H1 (cell line): ENCODE measurements at regions of chr9 and their contacts with region 1.

Region 1: DNA sequence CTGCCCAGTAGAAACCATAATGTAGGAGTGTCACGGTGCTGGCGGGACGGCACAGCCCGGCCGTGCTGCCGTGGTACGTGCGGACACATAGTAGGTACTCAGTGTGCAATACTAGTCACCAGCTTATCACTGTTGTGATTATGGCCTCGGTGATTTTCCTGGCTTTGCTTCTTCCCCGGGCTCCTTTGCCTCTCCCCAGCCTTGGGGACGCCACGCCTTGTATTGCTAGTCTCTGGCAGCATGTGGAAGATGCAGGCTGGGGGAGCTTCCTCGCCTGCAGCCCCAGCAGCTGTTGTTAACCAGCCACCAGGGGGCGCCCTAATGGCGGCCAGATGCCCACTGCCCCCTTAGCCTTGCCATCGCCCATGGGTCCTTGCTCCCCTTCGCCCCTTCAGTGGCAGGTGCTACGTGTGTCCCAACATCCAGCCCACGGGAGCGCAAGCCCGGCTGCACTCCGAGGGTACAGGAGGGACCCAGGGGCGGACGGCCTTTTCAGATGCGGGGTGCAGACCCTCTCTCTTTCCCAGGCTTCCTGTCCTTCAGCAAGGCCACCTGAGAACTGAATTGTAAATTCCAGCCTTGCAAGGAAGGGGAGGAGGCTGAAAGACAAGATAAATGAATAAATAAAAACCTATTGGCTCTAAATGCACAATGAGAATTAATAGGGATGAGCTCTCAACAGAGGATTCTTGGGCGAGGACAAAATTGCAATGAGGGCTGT is 8.0 kb downstream of the NTNG2 start:
- DNase-seq: peak in 1 of 2 experiments; percentile 91
- H3K4me3 ChIP-seq: no peak overlapping the region
- H3K27ac ChIP-seq: no peak overlapping the region
- H3K4me1 ChIP-seq: peaks cover 0 to 3% (median under 1%) of the 10 kb centered on the region in 4 experiments; a peak in 4 of 7 replicates
- H3K27me3 ChIP-seq: peaks cover 4 to 17% (median 14%) of the 10 kb centered on the region in 4 experiments
- CTCF ChIP-seq: peak; percentile 95 to 96 (median 95)
- EP300 ChIP-seq: no peak
- POLR2A ChIP-seq: no peak
- RAD21 ChIP-seq: peak; percentile 83 to 90

Region 2: DNA sequence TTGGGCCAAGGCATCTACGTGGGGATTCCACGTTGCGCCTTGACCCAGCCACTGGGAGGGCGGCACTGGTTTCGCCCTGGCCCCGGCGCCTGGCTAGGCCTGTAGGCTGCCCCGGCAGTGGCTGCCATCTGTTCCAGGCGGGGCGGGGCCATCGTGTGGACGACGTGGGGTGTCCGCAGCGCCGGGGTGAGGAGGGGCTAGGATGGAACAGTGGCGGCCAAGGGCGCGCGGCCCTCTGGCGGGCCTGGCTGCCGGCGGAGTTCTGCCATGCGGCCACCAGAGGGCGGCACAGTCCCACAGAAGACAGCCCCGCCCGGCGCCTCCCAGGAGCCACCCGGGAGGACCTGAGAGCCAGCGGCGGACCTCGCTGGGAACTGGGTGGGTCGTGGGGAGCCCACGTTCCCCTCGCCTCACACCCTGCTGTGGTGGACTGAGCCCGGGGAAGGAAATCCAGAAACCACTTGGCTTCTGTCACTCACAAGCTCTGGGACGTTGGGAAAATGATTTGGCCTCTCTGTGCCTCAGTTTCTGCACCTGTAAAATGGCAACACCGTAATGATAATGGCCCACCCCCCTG is 407.4 kb before region 1 on chr9:
- CTCF ChIA-PET with region 1: interaction called, 19 read pairs
- POLR2A ChIA-PET with region 1: no interaction called
- DNase-seq: peak; percentile 29 to 94
- H3K4me3 ChIP-seq: peak overlapping the region in 1 of 4 experiments; percentile 13; a peak in 1 of 8 replicates
- H3K27ac ChIP-seq: no peak overlapping the region
- H3K4me1 ChIP-seq: peaks cover 0 to 4% (median 0%) of the 10 kb centered on the region in 4 experiments; a peak in 2 of 7 replicates
- H3K27me3 ChIP-seq: no peaks in the 10 kb centered on the region
- CTCF ChIP-seq: peak; percentile 82 to 96 (median 84)
- EP300 ChIP-seq: no peak
- POLR2A ChIP-seq: no peak
- RAD21 ChIP-seq: peak; percentile 95 to 97

Region 3: GRCh38 chr9:132154863-132155309 is 14.9 kb before region 1 on chr9:
- CTCF ChIA-PET with region 1: interaction called, 28 read pairs
- POLR2A ChIA-PET with region 1: interaction called, 3 read pairs
- DNase-seq: no peak
- H3K4me3 ChIP-seq: no peak overlapping the region
- H3K27ac ChIP-seq: no peak overlapping the region
- H3K4me1 ChIP-seq: peaks cover 0 to 12% (median 6%) of the 10 kb centered on the region in 4 experiments; a peak in 5 of 7 replicates
- H3K27me3 ChIP-seq: peaks cover 0 to 14% (median 3%) of the 10 kb centered on the region in 4 experiments; a peak in 5 of 7 replicates
- CTCF ChIP-seq: no peak
- EP300 ChIP-seq: no peak
- POLR2A ChIP-seq: no peak
- RAD21 ChIP-seq: no peak; a peak in 1 of 4 replicates

Region 4: GRCh38 chr9:132182314-132183091 is 12.7 kb after region 1 on chr9:
- CTCF ChIA-PET with region 1: interaction called, 203 read pairs
- POLR2A ChIA-PET with region 1: interaction called, 5 read pairs
- DNase-seq: no peak
- H3K4me3 ChIP-seq: no peak overlapping the region; a peak in 1 of 8 replicates
- H3K27ac ChIP-seq: no peak overlapping the region
- H3K4me1 ChIP-seq: peaks cover 8 to 41% (median 31%) of the 10 kb centered on the region in 4 experiments
- H3K27me3 ChIP-seq: peaks cover 0 to 11% (median 10%) of the 10 kb centered on the region in 4 experiments; a peak in 6 of 7 replicates
- CTCF ChIP-seq: peak in 2 of 3 experiments; percentile 32 to 53; a peak in 3 of 4 replicates
- EP300 ChIP-seq: no peak
- POLR2A ChIP-seq: no peak
- RAD21 ChIP-seq: 0 out of 4 replicates have a peak, but pooled peaks have one; percentile 16

Region 5: GRCh38 chr9:132201780-132202703 is 32.2 kb after region 1 on chr9:
- CTCF ChIA-PET with region 1: interaction called, 18 read pairs
- POLR2A ChIA-PET with region 1: no interaction called
- DNase-seq: no peak
- H3K4me3 ChIP-seq: no peak overlapping the region
- H3K27ac ChIP-seq: no peak overlapping the region
- H3K4me1 ChIP-seq: peaks cover 0 to 7% (median 5%) of the 10 kb centered on the region in 4 experiments; a peak in 5 of 7 replicates
- H3K27me3 ChIP-seq: no peaks in the 10 kb centered on the region
- CTCF ChIP-seq: peak in 1 of 3 experiments; percentile 6; a peak in 1 of 4 replicates
- EP300 ChIP-seq: no peak
- POLR2A ChIP-seq: no peak
- RAD21 ChIP-seq: 0 out of 4 replicates have a peak, but pooled peaks of 1 of the 2 experiments have one; percentile 3

Region 6: DNA sequence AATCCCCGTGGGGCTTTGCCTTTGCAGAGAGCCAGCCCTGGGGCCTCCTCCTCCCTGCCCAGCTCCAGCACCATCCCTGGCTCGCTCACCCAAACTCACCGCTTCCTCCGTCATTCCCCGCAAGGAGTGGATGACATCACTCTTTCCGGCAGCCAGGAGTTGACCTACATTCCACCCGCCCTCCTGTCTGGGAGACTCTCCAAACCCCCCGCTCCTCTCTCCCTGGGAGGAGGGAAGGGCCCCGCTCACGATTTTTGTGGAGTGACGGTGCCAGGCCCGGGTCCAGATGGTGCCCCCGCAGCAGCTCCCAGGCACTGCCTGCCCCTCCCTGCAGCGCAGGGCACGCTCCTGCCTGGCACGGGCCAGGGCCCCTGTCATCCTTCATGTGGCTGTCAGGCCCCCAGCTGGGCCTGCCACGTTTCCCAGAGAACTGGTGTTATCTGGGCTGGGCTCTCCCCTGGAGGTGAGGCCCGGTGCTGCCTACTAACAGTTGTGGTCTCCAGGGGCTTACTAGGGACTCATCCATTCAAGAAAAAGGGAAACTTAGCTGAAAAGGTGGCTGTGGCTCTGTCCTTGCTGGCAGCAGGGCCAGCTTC is 44.3 kb after region 1 on chr9:
- CTCF ChIA-PET with region 1: interaction called, 64 read pairs
- POLR2A ChIA-PET with region 1: interaction called, 4 read pairs
- DNase-seq: peak in 1 of 2 experiments; percentile 74
- H3K4me3 ChIP-seq: peak overlapping the region in 1 of 4 experiments; percentile 31; a peak in 1 of 8 replicates
- H3K27ac ChIP-seq: no peak overlapping the region
- H3K4me1 ChIP-seq: peaks cover 0 to 8% (median 5%) of the 10 kb centered on the region in 4 experiments; a peak in 6 of 7 replicates
- H3K27me3 ChIP-seq: no peaks in the 10 kb centered on the region
- CTCF ChIP-seq: peak in 1 of 3 experiments; percentile 10; a peak in 1 of 4 replicates
- EP300 ChIP-seq: no peak
- POLR2A ChIP-seq: no peak
- RAD21 ChIP-seq: no peak

Region 7: GRCh38 chr9:132249123-132249522 is 79.3 kb after region 1 on chr9:
- CTCF ChIA-PET with region 1: interaction called, 23 read pairs
- POLR2A ChIA-PET with region 1: no interaction called
- DNase-seq: no peak
- H3K4me3 ChIP-seq: no peak overlapping the region
- H3K27ac ChIP-seq: no peak overlapping the region
- H3K4me1 ChIP-seq: peaks cover 0 to 12% (median 2%) of the 10 kb centered on the region in 4 experiments; a peak in 3 of 7 replicates
- H3K27me3 ChIP-seq: no peaks in the 10 kb centered on the region; a peak in 2 of 7 replicates
- CTCF ChIP-seq: no peak
- EP300 ChIP-seq: no peak
- POLR2A ChIP-seq: no peak
- RAD21 ChIP-seq: no peak

Region 8: GRCh38 chr9:132486706-132487350 is 317.0 kb after region 1 on chr9:
- CTCF ChIA-PET with region 1: no interaction called
- POLR2A ChIA-PET with region 1: no interaction called
- DNase-seq: no peak
- H3K4me3 ChIP-seq: no peak overlapping the region
- H3K27ac ChIP-seq: no peak overlapping the region
- H3K4me1 ChIP-seq: peaks cover 0 to 4% (median 2%) of the 10 kb centered on the region in 4 experiments; a peak in 3 of 7 replicates
- H3K27me3 ChIP-seq: no peaks in the 10 kb centered on the region
- CTCF ChIP-seq: no peak
- EP300 ChIP-seq: no peak
- POLR2A ChIP-seq: no peak
- RAD21 ChIP-seq: no peak